B cell (primary cell): ENCODE measurements at regions of chr14 and their contacts with region 1.

Region 1: DNA sequence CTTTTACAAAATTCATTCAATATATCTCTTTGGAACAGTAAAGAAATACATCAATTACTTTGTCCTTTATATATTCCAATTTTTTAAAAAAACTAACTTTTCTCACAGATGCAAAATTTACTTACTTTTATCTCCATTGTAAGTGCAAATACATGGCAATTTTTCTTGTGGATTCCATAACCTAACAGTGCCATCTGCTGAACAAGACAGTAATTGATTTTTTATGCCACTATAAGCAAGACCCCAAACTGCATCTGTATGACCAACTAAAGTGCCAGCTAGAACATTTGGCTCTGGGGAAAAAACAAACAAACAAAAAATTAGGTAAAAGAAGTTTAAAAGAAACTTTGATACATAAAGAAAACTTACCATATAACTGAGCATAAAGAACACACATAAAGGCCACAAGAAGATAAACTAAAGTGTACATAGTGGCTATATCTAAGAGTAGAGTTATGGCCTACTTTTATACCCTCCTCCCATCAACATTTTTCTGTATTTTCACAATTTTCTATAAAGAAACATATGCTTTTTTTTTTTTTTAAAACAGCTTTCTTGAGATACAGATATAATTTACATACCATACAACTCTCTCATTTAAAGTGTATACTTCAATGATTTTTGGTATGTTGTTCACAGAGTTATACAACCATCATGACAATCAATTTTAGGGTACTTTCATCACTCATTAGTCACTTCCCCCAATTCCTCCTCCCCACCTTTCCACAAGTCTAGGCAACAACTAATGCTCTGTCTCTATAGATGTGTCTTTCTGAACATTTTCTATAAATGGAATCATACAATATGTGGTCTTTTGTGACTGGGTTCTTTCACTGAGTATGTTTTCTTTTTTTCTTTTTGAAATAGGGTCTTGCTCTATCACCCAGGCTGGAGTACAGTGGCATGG is 32.6 kb downstream of the COCH start:
- DNase-seq: peak; percentile 35
- ATAC-seq: peak; percentile 33
- H3K4me3 ChIP-seq: no peak overlapping the region
- H3K4me3 Mint-ChIP-seq: no peak overlapping the region
- H3K27ac ChIP-seq: no peak overlapping the region
- H3K27ac Mint-ChIP-seq: no peak overlapping the region
- H3K4me1 ChIP-seq: no peaks in the 10 kb centered on the region
- H3K4me1 Mint-ChIP-seq: no peaks in the 10 kb centered on the region
- H3K27me3 ChIP-seq: no peaks in the 10 kb centered on the region
- H3K27me3 Mint-ChIP-seq: no peaks in the 10 kb centered on the region
- CTCF ChIP-seq: peak; percentile 45

Region 2: GRCh38 chr14:30656190-30656632 is 250.8 kb before region 1 on chr14:
- CTCF ChIA-PET with region 1: interaction called, 14 read pairs
- POLR2A ChIA-PET with region 1: no interaction called
- intact Hi-C with region 1: loop called (anchors 1 kb)
- DNase-seq: peak; percentile 60
- ATAC-seq: peak; percentile 41
- H3K4me3 ChIP-seq: no peak overlapping the region
- H3K4me3 Mint-ChIP-seq: no peak overlapping the region
- H3K27ac ChIP-seq: no peak overlapping the region
- H3K27ac Mint-ChIP-seq: no peak overlapping the region
- H3K4me1 ChIP-seq: no peaks in the 10 kb centered on the region
- H3K4me1 Mint-ChIP-seq: no peaks in the 10 kb centered on the region
- H3K27me3 ChIP-seq: no peaks in the 10 kb centered on the region
- H3K27me3 Mint-ChIP-seq: no peaks in the 10 kb centered on the region
- CTCF ChIP-seq: peak; percentile 81